GM10248 (cell line): ENCODE measurements at regions of chr17 and their contacts with region 1.

Region 1: DNA sequence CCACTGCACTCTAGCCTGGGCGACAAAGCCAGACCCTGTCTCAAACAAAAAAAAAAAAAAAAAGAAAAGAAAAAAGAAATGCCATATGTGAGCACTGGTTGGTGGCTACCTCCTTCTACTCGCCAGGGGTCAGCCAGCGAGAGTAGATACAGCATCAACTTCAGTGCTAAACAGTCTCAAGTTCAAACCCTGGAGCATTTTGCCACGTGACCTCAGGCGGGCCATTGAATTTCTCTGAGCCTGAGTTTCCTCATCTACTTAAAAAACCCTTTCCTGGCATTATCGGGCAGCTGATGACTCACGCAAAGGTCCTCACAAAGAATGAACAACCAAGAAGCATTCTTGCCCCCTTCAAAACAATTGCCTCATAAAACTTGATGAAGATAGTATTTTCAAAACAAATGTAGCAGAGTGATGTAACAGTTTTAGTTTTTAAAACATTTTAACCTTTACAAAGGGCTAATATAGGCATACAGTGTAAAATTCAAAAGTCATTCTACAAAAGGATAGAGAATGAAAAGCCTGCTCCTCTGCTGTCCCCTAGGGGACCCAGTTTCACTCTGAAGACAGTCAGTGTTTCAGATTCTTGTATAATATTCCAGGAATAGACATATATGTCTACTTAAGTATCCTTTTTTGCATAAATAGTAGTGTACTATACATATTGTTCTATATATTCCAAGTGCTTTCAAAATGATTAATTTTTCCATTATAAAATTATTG is 28.4 kb downstream of the DNAH2 start:
- DNase-seq: no peak
- CTCF ChIP-seq: no peak

Region 2: DNA sequence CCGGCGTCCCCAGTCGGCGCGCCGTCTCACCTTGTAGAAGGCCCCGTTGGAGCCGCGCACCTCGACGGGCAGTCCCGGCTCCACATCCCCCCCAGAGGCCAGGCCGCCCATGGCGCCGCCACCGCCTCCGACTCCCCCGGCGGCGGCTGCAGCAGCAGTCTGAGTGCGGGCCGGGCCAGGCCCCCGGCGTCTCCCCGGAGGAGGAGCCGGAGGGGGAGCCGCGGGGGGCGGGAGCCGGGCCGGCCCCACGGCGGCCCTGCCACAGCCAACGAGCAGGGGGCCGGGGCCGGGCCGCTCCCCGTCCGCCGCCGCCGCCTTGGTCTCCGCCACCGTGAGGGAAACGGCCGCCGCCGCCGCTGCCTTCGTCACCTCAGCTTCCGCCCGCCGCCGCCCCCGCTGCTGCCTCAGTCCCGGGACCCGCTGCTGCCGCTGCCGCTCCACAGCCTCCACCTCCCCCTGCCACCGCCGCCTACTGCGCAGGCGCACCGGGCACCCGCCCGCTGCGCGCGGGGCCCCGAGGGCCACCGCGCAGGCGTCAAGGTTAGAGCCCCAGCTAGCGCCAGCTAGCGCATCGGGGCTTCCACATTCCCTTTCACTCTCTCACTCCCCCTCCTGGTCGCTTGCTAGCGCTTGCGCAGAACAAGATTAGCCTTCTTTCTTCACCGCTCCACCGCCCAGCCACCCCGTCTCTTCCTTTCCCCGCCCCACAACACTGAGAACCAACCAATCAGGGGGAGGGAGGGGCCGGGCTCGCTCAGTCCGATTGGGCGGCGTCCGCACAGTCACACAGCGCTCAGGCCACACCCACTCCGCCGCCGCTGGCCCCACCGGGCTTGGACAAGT is 131.3 kb before region 1 on chr17 and contains the start of gene FXR2:
- CTCF ChIA-PET with region 1: no interaction called
- POLR2A ChIA-PET with region 1: no interaction called
- DNase-seq: peak; percentile 99
- CTCF ChIP-seq: peak; percentile 57

Region 3: GRCh38 chr17:7729816-7730215 is 16.1 kb before region 1 on chr17:
- CTCF ChIA-PET with region 1: interaction called, 19 read pairs
- POLR2A ChIA-PET with region 1: no interaction called
- DNase-seq: no peak
- CTCF ChIP-seq: no peak

Region 4: DNA sequence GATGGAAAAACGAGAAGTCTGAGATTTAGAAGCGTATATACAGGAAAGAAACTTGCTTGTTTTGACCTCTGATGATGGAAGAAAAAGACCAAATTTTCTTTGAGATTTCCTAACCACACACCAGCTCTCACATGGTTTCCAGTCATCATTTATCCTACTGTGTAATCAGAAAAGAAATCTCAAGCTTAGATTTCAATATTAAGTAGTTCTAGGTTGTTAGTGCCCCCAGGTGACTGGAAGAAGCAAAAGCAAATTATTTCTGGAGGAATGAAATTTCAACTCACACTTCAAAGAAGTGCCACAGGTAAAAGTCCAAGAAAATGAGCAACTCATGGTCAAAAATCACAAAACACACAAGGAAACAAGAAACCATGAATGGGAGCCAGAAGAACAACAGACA is 36.3 kb after region 1 on chr17:
- CTCF ChIA-PET with region 1: interaction called, 23 read pairs
- POLR2A ChIA-PET with region 1: no interaction called
- DNase-seq: no peak
- CTCF ChIP-seq: peak; percentile 14

Region 5: GRCh38 chr17:7982171-7982570 is 236.3 kb after region 1 on chr17:
- CTCF ChIA-PET with region 1: interaction called, 10 read pairs
- POLR2A ChIA-PET with region 1: no interaction called
- DNase-seq: no peak
- CTCF ChIP-seq: no peak